Activated CD4-positive, alpha-beta T cell treated with anti-CD3 and anti-CD28 coated beads, Interleukin-2, amount 10 ng/mL, durations not matched to agents 24 days and 14 days (primary cell): ENCODE measurements at regions of chr9 and their contacts with region 1.

Region 1: DNA sequence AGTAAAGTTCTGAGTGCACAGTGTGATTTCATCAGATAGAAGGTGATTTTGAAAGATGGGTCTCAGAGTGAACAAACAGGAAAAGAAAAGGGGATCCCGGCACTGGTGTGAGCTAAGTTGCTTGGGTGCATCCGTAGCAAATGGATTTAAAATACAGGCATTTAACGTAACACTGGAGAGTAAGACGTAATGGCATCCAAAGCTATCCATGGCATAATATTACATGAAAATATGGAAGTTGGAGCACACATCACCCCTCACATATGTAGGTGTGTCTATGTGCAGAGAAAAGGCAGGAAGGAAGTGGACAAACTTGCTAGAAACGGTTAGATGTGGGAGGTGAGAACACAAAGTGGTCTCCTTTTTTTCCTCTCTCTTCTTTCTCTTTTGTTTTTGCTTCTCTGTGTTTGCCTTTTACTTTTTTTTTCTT is 38.2 kb upstream of the SEMA4D start:
- DNase-seq: peak; percentile 83
- H3K4me3 Mint-ChIP-seq: peak overlapping the region; percentile 73
- H3K27ac Mint-ChIP-seq: peak overlapping the region; percentile 90
- H3K4me1 Mint-ChIP-seq: peaks cover 80% of the 10 kb centered on the region
- H3K27me3 Mint-ChIP-seq: no peaks in the 10 kb centered on the region

Region 2: GRCh38 chr9:89234205-89235067 is 301.7 kb before region 1 on chr9:
- intact Hi-C with region 1: no loop called
- DNase-seq: peak; percentile 72
- H3K4me3 Mint-ChIP-seq: no peak overlapping the region
- H3K27ac Mint-ChIP-seq: peak overlapping the region; percentile 60
- H3K4me1 Mint-ChIP-seq: peaks cover 6% of the 10 kb centered on the region
- H3K27me3 Mint-ChIP-seq: peaks cover 65% of the 10 kb centered on the region

Region 3: GRCh38 chr9:89418882-89419640 is 117.1 kb before region 1 on chr9:
- intact Hi-C with region 1: loop called (anchors 1 kb)
- DNase-seq: peak; percentile 92
- H3K4me3 Mint-ChIP-seq: peak overlapping the region; percentile 93
- H3K27ac Mint-ChIP-seq: peak overlapping the region; percentile 86
- H3K4me1 Mint-ChIP-seq: peaks cover 82% of the 10 kb centered on the region
- H3K27me3 Mint-ChIP-seq: no peaks in the 10 kb centered on the region

Region 4: DNA sequence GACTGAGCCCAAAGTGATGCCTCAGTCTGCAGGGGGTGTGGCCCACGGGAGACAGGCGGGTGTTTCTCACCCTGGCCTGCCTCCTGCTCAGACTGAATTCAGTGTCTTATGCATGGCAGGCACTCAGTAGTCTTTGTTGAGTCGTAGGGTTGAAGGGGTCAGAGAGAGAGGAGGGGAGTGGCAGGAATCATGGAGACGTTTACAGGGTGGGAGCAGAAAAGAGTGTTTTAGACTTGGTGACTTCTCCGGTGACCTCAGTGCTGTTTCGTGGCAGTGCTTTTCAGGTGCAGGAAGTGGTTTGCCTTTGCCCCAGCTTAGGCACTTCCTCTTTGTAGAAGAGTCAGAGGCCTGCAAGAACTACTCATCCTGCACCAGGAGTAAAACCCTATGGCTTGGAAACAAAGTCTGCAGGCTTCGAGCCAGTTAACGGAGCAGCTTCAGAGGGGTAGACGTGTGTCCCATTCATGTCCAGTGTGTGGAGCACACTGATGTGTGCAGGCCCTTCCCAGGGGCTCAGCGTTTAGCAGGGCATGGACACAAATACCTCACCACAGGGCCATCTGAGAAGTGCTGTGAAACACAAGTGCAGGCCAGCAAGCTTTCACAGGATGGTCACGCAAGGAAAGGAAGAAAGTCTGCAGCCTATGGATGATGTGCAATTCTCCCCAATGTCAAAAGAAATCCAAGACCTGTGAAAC is 13.8 kb before region 1 on chr9:
- intact Hi-C with region 1: loop called (anchors 1 kb)
- DNase-seq: peak; percentile 94
- H3K4me3 Mint-ChIP-seq: peak overlapping the region; percentile 68
- H3K27ac Mint-ChIP-seq: peak overlapping the region; percentile 94
- H3K4me1 Mint-ChIP-seq: peaks cover 81% of the 10 kb centered on the region
- H3K27me3 Mint-ChIP-seq: no peaks in the 10 kb centered on the region

Region 5: DNA sequence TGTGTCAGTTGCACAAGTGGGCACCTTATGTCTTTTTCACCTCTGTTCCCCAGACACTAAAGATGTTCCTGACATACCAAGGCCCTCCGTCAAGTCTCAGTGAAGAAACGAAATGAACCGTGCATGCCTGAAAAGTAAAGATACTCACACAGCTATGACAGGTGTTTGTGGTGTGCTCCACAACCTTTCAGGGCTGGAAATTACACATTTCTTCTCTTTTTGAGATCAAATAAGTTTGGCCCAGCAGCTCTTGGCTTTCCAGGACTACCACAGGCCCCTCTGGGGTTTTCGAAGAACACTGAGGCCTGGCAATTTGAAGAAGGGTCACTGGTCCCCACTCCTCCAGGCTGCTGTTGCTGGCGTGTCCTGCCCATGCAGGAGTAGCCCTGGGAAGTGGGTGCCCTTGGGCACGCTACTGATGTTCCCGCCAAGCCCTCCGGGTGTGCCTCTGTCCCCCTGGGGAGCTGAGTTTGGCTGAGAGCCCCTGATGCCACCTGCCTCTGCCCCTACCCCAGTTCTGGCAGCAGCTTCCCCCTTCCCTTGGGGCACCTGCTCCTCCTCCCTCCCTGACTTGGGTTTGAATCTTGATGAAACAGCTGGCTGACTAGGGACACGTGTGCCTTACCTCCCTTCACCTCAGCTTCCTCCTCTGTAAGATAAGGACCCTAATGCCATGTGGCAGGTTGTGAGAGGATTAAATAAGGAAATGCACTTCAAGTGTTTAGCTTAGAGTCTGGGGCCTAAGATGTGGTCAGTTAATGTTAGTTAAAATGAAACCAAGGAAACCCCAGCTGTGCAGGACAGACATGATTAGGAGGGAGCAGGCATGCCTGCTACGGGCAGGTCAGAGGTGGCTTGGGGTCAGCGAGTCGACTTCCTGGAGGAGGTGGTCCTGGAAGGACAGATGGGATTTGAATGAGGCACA is 19.6 kb after region 1 on chr9:
- intact Hi-C with region 1: no loop called
- DNase-seq: no peak
- H3K4me3 Mint-ChIP-seq: no peak overlapping the region
- H3K27ac Mint-ChIP-seq: peak overlapping the region; percentile 30
- H3K4me1 Mint-ChIP-seq: peaks cover 22% of the 10 kb centered on the region
- H3K27me3 Mint-ChIP-seq: peaks cover 25% of the 10 kb centered on the region